CD4-positive, alpha-beta T cell (primary cell): ENCODE measurements at regions of chr20 and their contacts with region 1.

Region 1: DNA sequence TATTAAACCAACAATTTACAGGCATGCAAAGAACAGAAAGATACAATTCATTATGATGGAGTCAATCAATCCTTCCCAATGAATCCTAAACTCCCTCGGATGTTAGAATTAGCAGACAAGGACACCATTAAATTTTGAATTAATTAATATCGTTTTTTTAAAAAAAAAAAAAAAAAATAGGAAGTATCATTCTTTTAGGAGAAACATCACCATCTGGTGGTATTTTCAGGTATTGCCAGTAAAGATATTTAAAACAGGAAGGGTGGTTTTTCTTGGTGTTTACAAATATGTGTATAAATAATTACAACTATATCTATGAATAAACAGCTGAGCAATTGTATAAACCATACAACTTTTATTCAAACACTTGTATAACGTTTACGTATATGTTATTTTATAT is 564.4 kb downstream of the HAO1 start:
- DNase-seq: peak in 3 of 14 experiments; percentile 1 to 6 (median 5)
- ATAC-seq: no peak
- H3K4me3 ChIP-seq: no peak overlapping the region
- H3K4me3 Mint-ChIP-seq: no peak overlapping the region
- H3K27ac ChIP-seq: no peak overlapping the region
- H3K27ac Mint-ChIP-seq: no peak overlapping the region
- H3K4me1 ChIP-seq: no peaks in the 10 kb centered on the region
- H3K4me1 Mint-ChIP-seq: no peaks in the 10 kb centered on the region
- H3K27me3 ChIP-seq: no peaks in the 10 kb centered on the region
- H3K27me3 Mint-ChIP-seq: no peaks in the 10 kb centered on the region
- CTCF ChIP-seq: no peak

Region 2: GRCh38 chr20:6142348-6142993 is 1233.4 kb before region 1 on chr20:
- CTCF ChIA-PET with region 1: no interaction called
- POLR2A ChIA-PET with region 1: no interaction called
- intact Hi-C with region 1: loop called in 1 of 2 experiments (anchors 5 kb)
- DNase-seq: peak in 12 of 14 experiments; percentile 1 to 70 (median 28)
- ATAC-seq: no peak
- H3K4me3 ChIP-seq: no peak overlapping the region
- H3K4me3 Mint-ChIP-seq: no peak overlapping the region
- H3K27ac ChIP-seq: no peak overlapping the region
- H3K27ac Mint-ChIP-seq: no peak overlapping the region
- H3K4me1 ChIP-seq: no peaks in the 10 kb centered on the region
- H3K4me1 Mint-ChIP-seq: no peaks in the 10 kb centered on the region
- H3K27me3 ChIP-seq: peaks cover 4 to 9% of the 10 kb centered on the region in 2 experiments
- H3K27me3 Mint-ChIP-seq: peaks cover 32% of the 10 kb centered on the region
- CTCF ChIP-seq: peak; percentile 86

Region 3: DNA sequence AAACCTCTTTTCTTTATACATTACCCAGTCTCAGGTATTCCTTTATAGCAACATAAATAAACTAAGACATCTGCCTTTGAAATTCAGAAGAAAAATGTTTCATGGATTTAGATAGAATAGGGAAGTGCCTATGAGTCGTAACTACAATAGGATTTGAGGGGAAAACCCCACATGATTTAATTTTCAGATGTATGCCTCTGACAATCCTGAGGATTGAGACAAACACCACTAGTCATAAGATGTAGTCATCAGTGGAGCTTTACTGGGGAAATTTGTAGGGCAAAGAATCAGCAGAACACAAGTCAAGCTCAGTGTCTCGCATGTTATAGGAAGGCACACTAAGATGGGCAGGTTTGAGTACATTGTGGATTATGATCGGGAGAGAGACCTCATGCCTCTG is 42.1 kb before region 1 on chr20:
- CTCF ChIA-PET with region 1: no interaction called
- POLR2A ChIA-PET with region 1: no interaction called
- intact Hi-C with region 1: loop called in 1 of 2 experiments (anchors 10 kb)
- DNase-seq: no peak
- ATAC-seq: no peak
- H3K4me3 ChIP-seq: no peak overlapping the region
- H3K4me3 Mint-ChIP-seq: no peak overlapping the region
- H3K27ac ChIP-seq: no peak overlapping the region
- H3K27ac Mint-ChIP-seq: no peak overlapping the region
- H3K4me1 ChIP-seq: no peaks in the 10 kb centered on the region
- H3K4me1 Mint-ChIP-seq: no peaks in the 10 kb centered on the region
- H3K27me3 ChIP-seq: no peaks in the 10 kb centered on the region
- H3K27me3 Mint-ChIP-seq: no peaks in the 10 kb centered on the region
- CTCF ChIP-seq: no peak

Region 4: GRCh38 chr20:8291873-8292272 is 916.0 kb after region 1 on chr20:
- CTCF ChIA-PET with region 1: no interaction called
- POLR2A ChIA-PET with region 1: no interaction called
- intact Hi-C with region 1: no loop called
- DNase-seq: no peak
- ATAC-seq: no peak
- H3K4me3 ChIP-seq: no peak overlapping the region
- H3K4me3 Mint-ChIP-seq: no peak overlapping the region
- H3K27ac ChIP-seq: no peak overlapping the region
- H3K27ac Mint-ChIP-seq: no peak overlapping the region
- H3K4me1 ChIP-seq: no peaks in the 10 kb centered on the region
- H3K4me1 Mint-ChIP-seq: no peaks in the 10 kb centered on the region
- H3K27me3 ChIP-seq: no peaks in the 10 kb centered on the region
- H3K27me3 Mint-ChIP-seq: no peaks in the 10 kb centered on the region
- CTCF ChIP-seq: no peak